Mucosa of descending colon (tissue), 3 donors: ENCODE measurements at regions of chr21 and their contacts with region 1.

Region 1: DNA sequence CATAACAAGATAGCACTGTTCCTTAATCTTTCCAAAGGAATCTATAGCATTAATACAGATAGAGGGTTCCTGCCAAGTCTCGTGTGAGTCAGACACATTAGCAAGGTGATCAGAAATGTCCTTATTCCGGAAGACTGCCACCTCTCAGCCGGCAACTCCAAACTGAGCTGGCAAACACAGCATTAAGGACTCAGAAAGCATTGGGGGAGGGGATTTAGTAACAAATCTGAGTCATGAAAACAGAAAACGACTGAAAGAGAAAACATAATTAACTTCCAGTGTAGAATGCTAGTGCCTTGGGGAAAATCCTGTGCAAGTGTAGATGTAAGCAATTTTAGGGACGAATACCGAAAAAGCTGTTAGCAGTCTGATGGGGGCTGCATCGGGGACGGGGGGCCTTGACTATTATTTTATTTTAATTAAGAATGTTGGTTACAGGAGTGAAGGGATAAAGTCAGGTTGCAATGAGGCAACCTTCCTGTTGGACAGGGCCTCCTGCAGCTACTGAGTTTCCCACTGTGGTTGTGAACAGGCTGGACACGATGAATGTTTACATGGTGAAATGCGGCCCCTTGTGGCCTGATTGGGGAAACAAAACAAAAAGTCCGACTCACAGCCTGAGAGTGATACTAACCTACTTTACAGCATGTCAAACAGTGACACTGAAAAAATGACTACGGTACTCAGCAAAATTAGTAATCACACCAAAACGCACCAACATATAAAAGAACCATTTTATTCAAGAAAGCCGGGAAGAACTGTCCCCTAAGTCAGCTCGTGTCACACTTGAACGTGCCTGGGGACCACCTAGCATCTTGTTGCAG is 20.7 kb downstream of the MIS18A start:
- DNase-seq: peak in 2 of 3 donors; percentile 72 to 77
- ATAC-seq: peak; percentile 91
- H3K4me3 ChIP-seq: no peak overlapping the region
- H3K4me1 ChIP-seq: no peaks in the 10 kb centered on the region
- CTCF ChIP-seq: peak; percentile 33

Region 2: GRCh38 chr21:31634993-31635392 is 623.2 kb before region 1 on chr21:
- intact Hi-C with region 1: no loop called
- DNase-seq: no peak
- ATAC-seq: no peak
- H3K4me3 ChIP-seq: no peak overlapping the region
- H3K4me1 ChIP-seq: no peaks in the 10 kb centered on the region
- CTCF ChIP-seq: no peak

Region 3: GRCh38 chr21:31786164-31786920 is 471.8 kb before region 1 on chr21:
- intact Hi-C with region 1: loop called in 1 of 2 experiments (anchors 2 kb)
- DNase-seq: no peak
- ATAC-seq: no peak
- H3K4me3 ChIP-seq: no peak overlapping the region
- H3K4me1 ChIP-seq: no peaks in the 10 kb centered on the region
- CTCF ChIP-seq: no peak

Region 4: GRCh38 chr21:31866077-31866511 is 392.1 kb before region 1 on chr21:
- intact Hi-C with region 1: loop called (anchors 2 to 5 kb)
- DNase-seq: peak; percentile 83 to 96 (median 90)
- ATAC-seq: peak; percentile 96
- H3K4me3 ChIP-seq: no peak overlapping the region
- H3K4me1 ChIP-seq: no peaks in the 10 kb centered on the region
- CTCF ChIP-seq: peak; percentile 80